ENCODE measurements at regions of chr15 and their contacts with region 1.

Region 1: DNA sequence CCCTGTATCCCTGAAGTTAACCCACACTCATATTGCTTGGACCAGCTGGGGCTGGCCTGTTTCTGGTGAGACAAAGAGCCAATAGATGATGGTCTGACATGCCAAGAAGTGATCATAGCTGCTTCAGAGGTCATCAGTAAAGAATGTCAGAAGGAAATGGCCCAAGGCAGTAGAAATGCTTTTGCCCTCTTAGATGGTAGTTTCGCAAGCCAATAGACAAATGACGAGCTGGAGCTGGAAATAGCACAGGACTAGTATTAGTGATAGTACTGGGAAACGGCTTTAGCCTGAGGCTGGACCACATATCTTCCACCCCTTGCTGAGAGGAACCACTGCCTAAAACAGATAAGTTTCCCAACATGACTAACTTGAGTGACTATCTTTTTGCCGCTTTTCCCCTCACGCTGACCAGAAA is 176.1 kb upstream of the THBS1 start:
- DNase-seq: peak; percentile 70 to 95
- H3K4me3 ChIP-seq: no peak overlapping the region
- H3K27ac ChIP-seq: no peak overlapping the region
- H3K4me1 ChIP-seq: peaks cover 32% of the 10 kb centered on the region
- H3K27me3 ChIP-seq: no peaks in the 10 kb centered on the region
- CTCF ChIP-seq: no peak

Region 2: GRCh38 chr15:39195988-39196486 is 208.7 kb before region 1 on chr15:
- CTCF ChIA-PET with region 1: no interaction called
- POLR2A ChIA-PET with region 1: no interaction called
- intact Hi-C with region 1: loop called (anchors 1 kb)
- DNase-seq: peak; percentile 86 to 97
- H3K4me3 ChIP-seq: no peak overlapping the region
- H3K27ac ChIP-seq: peak overlapping the region; percentile 79
- H3K4me1 ChIP-seq: peaks cover 32% of the 10 kb centered on the region
- H3K27me3 ChIP-seq: no peaks in the 10 kb centered on the region
- CTCF ChIP-seq: no peak

Region 3: DNA sequence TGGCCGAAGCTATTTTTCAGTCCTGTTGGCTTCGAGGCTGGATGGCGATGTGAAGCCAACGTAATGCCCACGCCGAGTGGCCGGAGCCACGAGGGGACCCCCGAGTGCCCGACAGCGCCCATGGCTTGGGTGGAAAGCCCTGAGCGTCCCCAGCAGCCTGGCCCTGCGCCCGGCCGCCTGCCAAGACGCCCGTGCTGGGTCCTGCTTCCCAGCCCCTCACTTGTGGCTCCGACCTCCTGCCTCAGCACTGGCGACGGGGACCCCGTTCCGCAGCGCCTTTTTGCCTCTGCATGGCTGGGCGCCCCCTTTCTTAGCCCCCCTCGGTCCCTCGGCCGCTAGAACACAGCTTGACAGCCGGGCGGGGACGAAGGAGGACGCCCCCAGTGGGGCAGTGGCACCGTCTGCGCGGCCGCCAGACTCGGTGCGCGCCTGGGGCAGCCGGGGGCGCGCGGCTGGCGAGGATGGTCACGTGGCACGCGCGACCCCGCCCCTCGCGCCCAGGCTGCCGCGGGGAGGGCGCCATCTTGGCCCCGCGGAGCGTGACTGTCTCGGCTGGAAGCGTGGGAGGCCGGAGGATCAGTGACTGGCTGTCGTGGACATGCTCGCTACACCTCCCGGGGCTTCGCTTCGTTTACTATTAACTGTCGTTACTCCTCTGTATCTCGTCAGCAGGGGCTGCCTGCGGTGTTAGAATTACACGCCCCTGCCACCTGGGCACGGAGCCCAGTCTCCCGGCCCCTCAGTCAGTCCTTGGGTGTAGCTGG is 515.9 kb after region 1 on chr15:
- CTCF ChIA-PET with region 1: no interaction called
- POLR2A ChIA-PET with region 1: no interaction called
- intact Hi-C with region 1: no loop called
- DNase-seq: peak in 1 of 2 experiments; percentile 68
- H3K4me3 ChIP-seq: peak overlapping the region; percentile 69
- H3K27ac ChIP-seq: no peak overlapping the region
- H3K4me1 ChIP-seq: peaks cover 28% of the 10 kb centered on the region
- H3K27me3 ChIP-seq: no peaks in the 10 kb centered on the region
- CTCF ChIP-seq: no peak

Measured in PC-9 (cell line).